ENCODE measurements at regions of chr7 and their contacts with region 1.

Region 1: DNA sequence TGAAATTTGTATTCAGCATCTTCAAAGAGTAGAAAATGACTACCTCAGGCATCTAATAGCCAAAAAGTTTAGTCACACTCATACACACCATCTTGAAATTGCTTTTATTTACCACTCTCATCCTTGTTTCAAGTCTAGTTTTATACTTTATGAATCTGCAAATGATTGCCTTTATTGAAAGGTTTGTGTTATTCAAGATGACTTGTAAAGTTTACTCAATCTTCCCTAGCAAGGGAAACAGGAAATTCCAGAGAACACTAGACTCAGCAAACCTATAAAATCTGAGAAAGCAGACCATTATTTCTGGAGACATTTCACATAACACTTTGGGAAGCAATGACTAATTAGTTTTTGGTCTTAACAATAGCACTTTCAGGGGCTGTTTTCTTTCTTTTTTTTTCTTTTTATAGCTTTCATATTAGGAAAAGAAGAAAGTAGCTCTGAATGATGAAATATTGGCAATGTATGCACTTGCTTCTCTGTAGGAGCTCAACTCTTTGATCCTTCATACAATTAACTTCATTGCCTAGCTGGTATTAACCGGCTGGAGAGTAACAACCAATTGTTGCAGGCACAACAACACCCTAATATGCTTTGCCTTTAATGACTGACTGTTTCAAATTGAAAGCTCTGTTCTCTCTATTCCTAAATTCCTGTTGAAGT is 68.9 kb upstream of the HDAC9 start:
- DNase-seq: peak; percentile 95
- H3K4me3 ChIP-seq: no peak overlapping the region
- H3K27ac ChIP-seq: peak overlapping the region; percentile 70
- H3K4me1 ChIP-seq: peaks cover 29% of the 10 kb centered on the region
- H3K27me3 ChIP-seq: no peaks in the 10 kb centered on the region
- CTCF ChIP-seq: no peak
- POLR2A ChIP-seq: no peak

Region 2: GRCh38 chr7:18393465-18394118 is 33.1 kb before region 1 on chr7:
- CTCF ChIA-PET with region 1: interaction called, 5 read pairs
- POLR2A ChIA-PET with region 1: no interaction called
- dilution Hi-C with region 1: no loop called
- intact Hi-C with region 1: loop called (anchors 1 kb)
- DNase-seq: peak; percentile 52
- H3K4me3 ChIP-seq: no peak overlapping the region
- H3K27ac ChIP-seq: no peak overlapping the region
- H3K4me1 ChIP-seq: peaks cover 16% of the 10 kb centered on the region
- H3K27me3 ChIP-seq: no peaks in the 10 kb centered on the region
- CTCF ChIP-seq: no peak
- POLR2A ChIP-seq: no peak

Region 3: GRCh38 chr7:18408461-18408860 is 18.2 kb before region 1 on chr7:
- CTCF ChIA-PET with region 1: interaction called, 9 read pairs
- POLR2A ChIA-PET with region 1: no interaction called
- dilution Hi-C with region 1: no loop called
- intact Hi-C with region 1: loop called (anchors 1 kb)
- DNase-seq: peak; percentile 75
- H3K4me3 ChIP-seq: no peak overlapping the region
- H3K27ac ChIP-seq: peak overlapping the region; percentile 28
- H3K4me1 ChIP-seq: peaks cover 23% of the 10 kb centered on the region
- H3K27me3 ChIP-seq: no peaks in the 10 kb centered on the region
- CTCF ChIP-seq: no peak
- POLR2A ChIP-seq: no peak

Region 4: GRCh38 chr7:18508443-18509427 is 82.0 kb after region 1 on chr7:
- CTCF ChIA-PET with region 1: interaction called, 4 read pairs
- POLR2A ChIA-PET with region 1: interaction called, 6 read pairs
- dilution Hi-C with region 1: no loop called
- intact Hi-C with region 1: loop called (anchors 2 kb)
- DNase-seq: peak; percentile 93
- H3K4me3 ChIP-seq: peak overlapping the region in 1 of 3 experiments; percentile 64
- H3K27ac ChIP-seq: peak overlapping the region; percentile 94
- H3K4me1 ChIP-seq: peaks cover 31% of the 10 kb centered on the region
- H3K27me3 ChIP-seq: no peaks in the 10 kb centered on the region
- CTCF ChIP-seq: no peak
- POLR2A ChIP-seq: no peak

Region 5: GRCh38 chr7:18541181-18541870 is 114.6 kb after region 1 on chr7:
- CTCF ChIA-PET with region 1: no interaction called
- POLR2A ChIA-PET with region 1: no interaction called
- dilution Hi-C with region 1: no loop called
- intact Hi-C with region 1: loop called (anchors 1 kb)
- DNase-seq: peak; percentile 88
- H3K4me3 ChIP-seq: no peak overlapping the region
- H3K27ac ChIP-seq: peak overlapping the region; percentile 62
- H3K4me1 ChIP-seq: peaks cover 4% of the 10 kb centered on the region
- H3K27me3 ChIP-seq: no peaks in the 10 kb centered on the region
- CTCF ChIP-seq: no peak
- POLR2A ChIP-seq: no peak

Measured in endothelial cell of umbilical vein (primary cell).